Transverse colon (tissue), 4 donors: ENCODE measurements at regions of chr10 and their contacts with region 1.

Region 1: GRCh38 chr10:115118346-115118745 is 25.2 kb downstream of the ATRNL1 start:
- DNase-seq: no peak
- H3K4me3 ChIP-seq: no peak overlapping the region
- H3K27ac ChIP-seq: no peak overlapping the region
- H3K4me1 ChIP-seq: no peaks in the 10 kb centered on the region
- H3K27me3 ChIP-seq: no peaks in the 10 kb centered on the region
- CTCF ChIP-seq: no peak
- EP300 ChIP-seq: no peak
- POLR2A ChIP-seq: no peak

Region 2: DNA sequence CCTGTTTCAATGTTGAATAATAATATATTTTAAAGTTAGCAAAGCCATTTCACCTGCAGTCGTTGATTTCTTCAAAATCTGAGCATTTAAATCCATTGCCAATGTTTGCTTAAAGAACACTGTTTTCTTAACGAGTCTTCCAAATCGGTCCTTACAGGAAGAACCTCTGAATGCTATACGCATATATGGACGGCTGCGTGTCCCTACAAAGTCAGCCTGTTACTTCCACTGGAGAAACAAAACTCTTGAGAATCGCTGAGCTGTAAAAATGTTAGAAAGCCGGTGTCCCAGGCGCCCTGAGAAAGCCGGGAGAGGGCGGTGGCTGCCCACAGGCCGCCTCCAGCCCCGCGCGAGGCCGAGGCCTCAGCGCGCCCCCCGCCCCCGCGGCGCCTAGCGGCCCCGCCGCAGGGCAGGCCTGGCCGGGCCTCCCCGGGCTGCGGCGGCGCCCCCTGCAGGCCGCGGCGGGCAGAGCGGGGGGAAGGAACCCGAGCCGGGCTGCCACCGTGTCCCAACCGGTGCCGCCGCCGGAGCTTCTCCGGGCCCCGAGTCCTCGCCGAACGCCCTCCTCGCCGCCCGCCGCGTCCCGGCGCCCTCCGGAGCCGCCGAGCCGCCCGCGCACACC is 296.9 kb before region 1 on chr10 and contains the start of gene FHIP2A:
- in situ Hi-C with region 1: no loop called
- intact Hi-C with region 1: no loop called
- DNase-seq: peak; percentile 86
- H3K4me3 ChIP-seq: peak within 1 kb of the TSS; percentile 79 to 98 (median 93)
- H3K27ac ChIP-seq: peak within 1 kb of the TSS; percentile 96 to 99 (median 97)
- H3K4me1 ChIP-seq: peaks cover 16 to 40% (median 20%) of the 10 kb centered on the region in 4 donors
- H3K27me3 ChIP-seq: no peaks in the 10 kb centered on the region
- CTCF ChIP-seq: peak; percentile 13 to 66 (median 44)
- EP300 ChIP-seq: no peak
- POLR2A ChIP-seq: no peak
- total RNA-seq, gene FHIP2A: 17.2 to 218 (median 25.5) TPM

Region 3: GRCh38 chr10:114876602-114877300 is 241.6 kb before region 1 on chr10:
- in situ Hi-C with region 1: loop called (anchors 10 to 25 kb)
- intact Hi-C with region 1: no loop called
- DNase-seq: peak; percentile 62
- H3K4me3 ChIP-seq: no peak overlapping the region
- H3K27ac ChIP-seq: no peak overlapping the region
- H3K4me1 ChIP-seq: peaks cover 0 to 12% (median 2%) of the 10 kb centered on the region in 4 donors
- H3K27me3 ChIP-seq: no peaks in the 10 kb centered on the region
- CTCF ChIP-seq: peak; percentile 55 to 67 (median 59)
- EP300 ChIP-seq: no peak
- POLR2A ChIP-seq: no peak

Region 4: GRCh38 chr10:115056186-115056585 is 62.2 kb before region 1 on chr10:
- in situ Hi-C with region 1: no loop called
- intact Hi-C with region 1: loop called (anchors 2 kb)
- DNase-seq: no peak
- H3K4me3 ChIP-seq: no peak overlapping the region
- H3K27ac ChIP-seq: no peak overlapping the region
- H3K4me1 ChIP-seq: no peaks in the 10 kb centered on the region
- H3K27me3 ChIP-seq: no peaks in the 10 kb centered on the region
- CTCF ChIP-seq: no peak
- EP300 ChIP-seq: no peak
- POLR2A ChIP-seq: no peak

Region 5: GRCh38 chr10:115483294-115483693 is 364.9 kb after region 1 on chr10:
- in situ Hi-C with region 1: no loop called
- intact Hi-C with region 1: no loop called
- DNase-seq: no peak
- H3K4me3 ChIP-seq: no peak overlapping the region
- H3K27ac ChIP-seq: no peak overlapping the region
- H3K4me1 ChIP-seq: no peaks in the 10 kb centered on the region
- H3K27me3 ChIP-seq: no peaks in the 10 kb centered on the region
- CTCF ChIP-seq: no peak
- EP300 ChIP-seq: no peak
- POLR2A ChIP-seq: no peak

Region 6: DNA sequence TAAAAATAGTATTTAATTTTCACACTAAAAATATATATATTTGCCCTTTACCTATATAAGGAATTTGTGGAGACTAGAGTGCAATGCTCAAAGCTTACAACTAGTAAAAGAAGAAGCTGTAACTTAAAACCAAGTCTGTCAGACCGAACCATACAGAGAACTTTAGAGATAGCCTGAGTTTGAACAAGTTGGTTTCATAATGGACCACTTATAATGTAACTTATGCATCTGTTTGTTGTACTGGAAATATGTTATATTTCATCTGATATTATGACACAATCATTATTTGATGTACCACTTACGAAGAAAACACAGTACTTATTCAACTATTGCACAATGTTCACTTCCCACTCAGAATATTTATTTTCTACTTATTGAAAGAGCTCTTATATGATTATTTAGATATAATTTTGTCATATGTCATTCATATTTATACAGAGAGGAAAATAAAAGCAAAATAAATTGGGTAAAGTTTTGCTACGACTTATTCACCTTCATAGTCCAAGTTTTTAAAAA is 437.6 kb after region 1 on chr10:
- in situ Hi-C with region 1: no loop called
- intact Hi-C with region 1: no loop called
- DNase-seq: no peak
- H3K4me3 ChIP-seq: no peak overlapping the region
- H3K27ac ChIP-seq: no peak overlapping the region
- H3K4me1 ChIP-seq: no peaks in the 10 kb centered on the region
- H3K27me3 ChIP-seq: no peaks in the 10 kb centered on the region
- CTCF ChIP-seq: no peak
- EP300 ChIP-seq: no peak
- POLR2A ChIP-seq: no peak

Region 7: GRCh38 chr10:116263918-116264655 is 1145.7 kb after region 1 on chr10:
- in situ Hi-C with region 1: no loop called
- intact Hi-C with region 1: no loop called
- DNase-seq: no peak
- H3K4me3 ChIP-seq: no peak overlapping the region
- H3K27ac ChIP-seq: no peak overlapping the region
- H3K4me1 ChIP-seq: no peaks in the 10 kb centered on the region
- H3K27me3 ChIP-seq: peaks cover 10% of the 10 kb centered on the region
- CTCF ChIP-seq: no peak
- EP300 ChIP-seq: no peak
- POLR2A ChIP-seq: no peak